RWPE1 (cell line): ENCODE measurements at regions of chr4 and their contacts with region 1.

Region 1: GRCh38 chr4:84971319-84971932 is 4.9 kb upstream of the WDFY3 start:
- DNase-seq: peak; percentile 36
- H3K27ac ChIP-seq: no peak overlapping the region
- CTCF ChIP-seq: peak; percentile 37

Region 2: DNA sequence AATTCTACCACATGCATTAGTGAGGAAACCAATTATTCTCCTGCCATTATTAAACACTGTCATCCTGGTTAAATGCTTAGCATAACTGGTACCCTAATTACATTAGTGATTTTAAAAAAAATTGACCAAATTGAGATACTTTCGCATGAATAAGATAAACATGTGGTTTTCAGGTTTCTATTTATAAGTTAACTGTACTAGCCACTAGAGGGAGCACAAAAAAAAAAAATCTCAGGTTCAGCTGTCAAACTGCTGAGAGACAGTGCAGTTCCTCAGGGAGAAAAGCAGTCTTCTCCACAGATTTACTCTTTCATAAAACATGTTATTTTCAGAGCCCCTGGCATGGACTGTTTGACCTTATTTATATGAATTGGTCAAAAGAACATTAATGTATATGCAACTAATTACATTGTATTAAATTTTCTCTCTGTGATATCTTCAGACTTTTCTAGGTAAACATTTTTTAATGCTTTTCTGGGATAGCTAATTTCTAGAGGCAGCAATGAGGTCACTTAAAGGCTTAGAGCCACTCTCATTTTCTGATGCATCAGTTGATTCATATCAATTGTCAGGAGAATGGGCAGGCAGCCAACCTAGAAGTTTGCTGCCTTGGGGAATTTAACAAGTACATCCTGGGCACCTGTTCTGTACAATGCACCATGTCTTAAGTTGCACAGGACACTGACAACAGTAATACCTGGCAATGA is 221.0 kb before region 1 on chr4:
- CTCF ChIA-PET with region 1: interaction called, 13 read pairs
- POLR2A ChIA-PET with region 1: no interaction called
- DNase-seq: peak; percentile 39
- H3K27ac ChIP-seq: no peak overlapping the region
- CTCF ChIP-seq: peak; percentile 72